Activated T-helper 1 cell treated with anti-CD3 and anti-CD28 coated beads, Interleukin-12 subunit alpha, Interleukin-12 subunit beta, Interleukin-2, Interleukin-4 antibody, amounts not matched to agents 30 ng/mL and 10 ng/mL and 1 ng/mL, durations not matched to agents 14 hours and 24 hours and 36 hours (primary cell): ENCODE measurements at regions of chr6 and their contacts with region 1.

Region 1: DNA sequence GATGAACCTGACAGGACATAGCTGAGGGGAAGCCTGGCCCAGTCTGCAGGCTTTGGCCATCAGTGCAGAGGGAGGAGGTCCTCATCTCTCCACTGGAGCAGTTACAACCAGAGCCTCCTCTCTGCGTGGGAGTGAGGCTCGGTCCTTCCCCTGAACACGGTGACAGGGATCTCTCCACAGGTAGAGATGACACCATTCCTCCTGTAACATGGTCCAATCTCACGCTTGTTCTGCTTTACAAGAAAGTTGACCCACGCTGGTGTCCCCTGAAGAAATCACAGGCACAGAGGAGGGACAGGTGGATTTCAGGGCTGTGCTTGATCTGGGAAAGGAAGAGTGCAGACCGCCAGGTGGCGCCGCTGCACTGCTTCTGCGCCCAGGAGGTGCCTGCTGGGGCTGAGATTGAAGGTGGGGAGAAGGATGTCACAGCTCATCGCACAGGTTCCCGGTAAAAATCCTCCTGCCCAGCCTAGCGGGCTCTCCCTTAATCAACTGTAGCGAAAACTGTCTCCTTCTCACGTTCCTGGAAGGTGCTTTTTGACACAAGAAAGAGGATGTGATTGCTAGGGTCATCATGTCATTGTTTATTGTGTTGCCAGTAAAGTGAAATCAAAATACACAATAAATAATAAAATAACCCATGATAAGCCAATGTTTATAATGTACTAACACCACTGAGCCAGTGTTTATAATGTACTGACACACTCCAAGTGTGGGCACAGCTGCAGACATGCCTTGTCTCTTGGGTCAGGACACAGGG is 20.4 kb downstream of the HLA-G start:
- DNase-seq: peak; percentile 70
- H3K4me3 Mint-ChIP-seq: no peak overlapping the region
- H3K27ac Mint-ChIP-seq: peak overlapping the region; percentile 50
- H3K4me1 Mint-ChIP-seq: peaks cover 37% of the 10 kb centered on the region
- H3K27me3 Mint-ChIP-seq: peaks cover 34% of the 10 kb centered on the region

Region 2: GRCh38 chr6:29887819-29888776 is 40.0 kb after region 1 on chr6:
- intact Hi-C with region 1: no loop called
- DNase-seq: peak; percentile 83
- H3K4me3 Mint-ChIP-seq: peak overlapping the region; percentile 87
- H3K27ac Mint-ChIP-seq: peak overlapping the region; percentile 93
- H3K4me1 Mint-ChIP-seq: peaks cover 17% of the 10 kb centered on the region
- H3K27me3 Mint-ChIP-seq: peaks cover 9% of the 10 kb centered on the region

Region 3: GRCh38 chr6:29926413-29927274 is 78.6 kb after region 1 on chr6:
- intact Hi-C with region 1: loop called (anchors 5 kb)
- DNase-seq: peak; percentile 79
- H3K4me3 Mint-ChIP-seq: peak overlapping the region; percentile 92
- H3K27ac Mint-ChIP-seq: peak overlapping the region; percentile 98
- H3K4me1 Mint-ChIP-seq: peaks cover 51% of the 10 kb centered on the region
- H3K27me3 Mint-ChIP-seq: peaks cover 4% of the 10 kb centered on the region

Region 4: DNA sequence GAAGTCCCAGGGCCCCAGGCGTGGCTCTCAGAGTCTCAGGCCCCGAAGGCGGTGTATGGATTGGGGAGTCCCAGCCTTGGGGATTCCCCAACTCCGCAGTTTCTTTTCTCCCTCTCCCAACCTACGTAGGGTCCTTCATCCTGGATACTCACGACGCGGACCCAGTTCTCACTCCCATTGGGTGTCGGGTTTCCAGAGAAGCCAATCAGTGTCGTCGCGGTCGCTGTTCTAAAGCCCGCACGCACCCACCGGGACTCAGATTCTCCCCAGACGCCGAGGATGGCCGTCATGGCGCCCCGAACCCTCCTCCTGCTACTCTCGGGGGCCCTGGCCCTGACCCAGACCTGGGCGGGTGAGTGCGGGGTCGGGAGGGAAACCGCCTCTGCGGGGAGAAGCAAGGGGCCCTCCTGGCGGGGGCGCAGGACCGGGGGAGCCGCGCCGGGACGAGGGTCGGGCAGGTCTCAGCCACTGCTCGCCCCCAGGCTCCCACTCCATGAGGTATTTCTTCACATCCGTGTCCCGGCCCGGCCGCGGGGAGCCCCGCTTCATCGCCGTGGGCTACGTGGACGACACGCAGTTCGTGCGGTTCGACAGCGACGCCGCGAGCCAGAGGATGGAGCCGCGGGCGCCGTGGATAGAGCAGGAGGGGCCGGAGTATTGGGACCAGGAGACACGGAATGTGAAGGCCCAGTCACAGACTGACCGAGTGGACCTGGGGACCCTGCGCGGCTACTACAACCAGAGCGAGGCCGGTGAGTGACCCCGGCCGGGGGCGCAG is 94.4 kb after region 1 on chr6 and contains the start of gene HLA-A:
- intact Hi-C with region 1: loop called (anchors 2 kb)
- DNase-seq: peak; percentile 88
- H3K4me3 Mint-ChIP-seq: peak within 1 kb of the TSS; percentile 95
- H3K27ac Mint-ChIP-seq: peak within 1 kb of the TSS; percentile 98
- H3K4me1 Mint-ChIP-seq: peaks cover 57% of the 10 kb centered on the region
- H3K27me3 Mint-ChIP-seq: no peaks in the 10 kb centered on the region
- total RNA-seq, gene HLA-A: 1,482 and 1,503 TPM in 2 replicates

Region 5: DNA sequence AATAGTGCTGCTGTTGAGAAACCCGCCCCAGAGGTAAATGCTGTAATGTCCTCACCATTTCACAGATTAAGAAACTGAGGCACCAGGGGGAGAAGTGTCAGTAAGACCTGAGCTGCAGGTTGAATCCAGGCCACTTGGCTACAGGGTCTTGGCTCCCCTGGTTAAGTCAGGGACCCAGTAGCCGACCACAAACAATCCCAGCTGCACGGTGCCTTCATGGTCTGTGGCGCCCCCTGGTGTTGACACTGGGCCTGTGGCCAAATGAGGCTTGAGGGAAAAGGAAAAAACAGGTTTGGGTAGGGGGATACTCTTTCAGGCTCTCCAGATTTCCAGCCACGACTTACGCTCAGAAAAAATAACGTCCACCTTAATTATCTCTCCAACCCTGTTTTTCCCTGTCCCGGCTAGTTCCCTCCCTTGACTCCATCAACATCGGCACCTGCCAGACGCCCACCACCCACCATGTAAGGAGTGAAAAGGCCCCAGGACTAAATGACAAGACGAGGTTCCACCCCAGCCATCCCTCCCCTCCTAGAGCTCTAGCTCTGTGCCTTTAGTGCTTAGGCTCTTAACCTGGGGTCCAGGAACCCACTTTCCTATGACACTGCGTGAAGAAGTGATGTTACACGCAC is 165.4 kb after region 1 on chr6:
- intact Hi-C with region 1: loop called (anchors 1 kb)
- DNase-seq: peak; percentile 27
- H3K4me3 Mint-ChIP-seq: no peak overlapping the region
- H3K27ac Mint-ChIP-seq: no peak overlapping the region
- H3K4me1 Mint-ChIP-seq: no peaks in the 10 kb centered on the region
- H3K27me3 Mint-ChIP-seq: peaks cover 9% of the 10 kb centered on the region

Region 6: DNA sequence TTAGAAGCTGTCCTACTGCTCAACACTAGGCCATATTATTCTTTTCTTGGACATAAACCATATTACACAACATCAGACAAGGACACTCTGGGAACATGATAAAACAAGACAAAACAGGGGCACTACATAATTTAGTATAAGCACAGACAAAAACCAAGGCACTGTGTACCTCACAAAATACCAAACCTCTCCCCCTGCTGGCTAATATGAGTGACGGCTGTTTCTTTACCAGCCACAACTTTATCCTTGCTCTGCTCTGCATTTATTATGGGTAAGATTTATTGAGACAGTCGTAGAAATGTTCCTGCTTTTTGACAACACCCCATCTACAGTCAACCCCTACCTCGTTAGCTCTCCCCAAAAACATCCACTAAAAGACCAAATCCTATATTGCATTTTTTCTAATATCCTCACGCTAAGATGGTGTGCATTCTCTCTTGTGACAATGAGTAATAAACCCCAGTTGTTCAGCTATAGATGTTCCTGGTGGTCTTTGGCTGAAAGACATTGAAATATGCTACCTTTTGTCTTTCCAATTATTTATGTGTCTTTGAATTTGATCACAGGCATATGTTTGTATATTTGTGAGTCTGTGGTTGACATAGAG is 189.2 kb after region 1 on chr6:
- intact Hi-C with region 1: loop called (anchors 1 kb)
- DNase-seq: no peak
- H3K4me3 Mint-ChIP-seq: no peak overlapping the region
- H3K27ac Mint-ChIP-seq: no peak overlapping the region
- H3K4me1 Mint-ChIP-seq: peaks cover 2% of the 10 kb centered on the region
- H3K27me3 Mint-ChIP-seq: no peaks in the 10 kb centered on the region

Region 7: DNA sequence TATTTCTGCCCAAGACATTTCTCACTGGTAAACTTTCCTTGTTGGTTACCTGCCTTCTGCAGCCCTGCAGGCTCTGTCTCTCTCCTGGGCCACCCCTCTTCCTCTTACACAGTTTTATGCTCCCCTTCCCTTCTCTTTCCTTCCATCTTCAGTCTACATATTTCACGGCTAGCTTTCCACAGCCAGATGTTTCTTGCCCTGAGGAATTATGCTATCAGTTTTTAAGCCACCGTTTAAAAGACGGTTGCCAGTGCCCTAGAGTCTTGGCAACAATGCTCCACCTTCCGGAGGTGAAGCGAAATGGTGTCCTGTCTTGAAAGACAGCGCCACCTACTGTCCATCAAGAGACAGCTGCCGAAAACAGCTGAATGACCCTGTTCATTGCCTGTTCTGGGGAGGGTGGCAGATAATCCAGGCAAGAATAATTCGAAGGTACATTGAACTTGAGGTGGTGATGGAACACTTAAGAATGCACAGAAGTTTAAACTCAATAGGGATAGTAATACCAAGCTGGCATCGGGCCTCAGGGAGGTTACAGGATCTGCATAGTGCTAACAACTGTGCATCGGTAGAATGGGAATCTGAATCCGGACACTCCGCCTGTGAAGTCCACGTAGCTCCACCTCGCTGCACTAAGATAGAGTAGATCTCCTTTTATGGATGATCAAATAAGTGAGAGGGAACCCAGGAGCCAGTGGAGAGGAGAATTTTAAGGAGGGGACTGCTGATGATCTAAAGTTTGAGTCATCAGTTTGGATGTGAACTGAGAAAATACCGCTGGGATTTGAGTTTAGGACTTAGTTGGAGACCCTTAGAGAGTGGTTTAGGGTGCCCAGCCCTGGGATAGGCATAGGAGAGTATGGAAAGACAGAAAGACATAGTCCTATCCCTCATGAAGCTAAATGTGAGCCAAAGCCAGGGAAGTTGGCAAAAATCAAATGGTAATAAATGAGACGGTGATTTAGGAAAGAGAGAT is 283.1 kb after region 1 on chr6:
- intact Hi-C with region 1: loop called (anchors 1 kb)
- DNase-seq: peak; percentile 57
- H3K4me3 Mint-ChIP-seq: no peak overlapping the region
- H3K27ac Mint-ChIP-seq: no peak overlapping the region
- H3K4me1 Mint-ChIP-seq: peaks cover 30% of the 10 kb centered on the region
- H3K27me3 Mint-ChIP-seq: peaks cover 65% of the 10 kb centered on the region

Region 8: GRCh38 chr6:30169658-30170614 is 321.9 kb after region 1 on chr6:
- intact Hi-C with region 1: loop called (anchors 1 kb)
- DNase-seq: no peak
- H3K4me3 Mint-ChIP-seq: no peak overlapping the region
- H3K27ac Mint-ChIP-seq: no peak overlapping the region
- H3K4me1 Mint-ChIP-seq: peaks cover 46% of the 10 kb centered on the region
- H3K27me3 Mint-ChIP-seq: peaks cover 39% of the 10 kb centered on the region